CD4-positive, alpha-beta memory T cell (primary cell): ENCODE measurements at regions of chr17 and their contacts with region 1.

Region 1: DNA sequence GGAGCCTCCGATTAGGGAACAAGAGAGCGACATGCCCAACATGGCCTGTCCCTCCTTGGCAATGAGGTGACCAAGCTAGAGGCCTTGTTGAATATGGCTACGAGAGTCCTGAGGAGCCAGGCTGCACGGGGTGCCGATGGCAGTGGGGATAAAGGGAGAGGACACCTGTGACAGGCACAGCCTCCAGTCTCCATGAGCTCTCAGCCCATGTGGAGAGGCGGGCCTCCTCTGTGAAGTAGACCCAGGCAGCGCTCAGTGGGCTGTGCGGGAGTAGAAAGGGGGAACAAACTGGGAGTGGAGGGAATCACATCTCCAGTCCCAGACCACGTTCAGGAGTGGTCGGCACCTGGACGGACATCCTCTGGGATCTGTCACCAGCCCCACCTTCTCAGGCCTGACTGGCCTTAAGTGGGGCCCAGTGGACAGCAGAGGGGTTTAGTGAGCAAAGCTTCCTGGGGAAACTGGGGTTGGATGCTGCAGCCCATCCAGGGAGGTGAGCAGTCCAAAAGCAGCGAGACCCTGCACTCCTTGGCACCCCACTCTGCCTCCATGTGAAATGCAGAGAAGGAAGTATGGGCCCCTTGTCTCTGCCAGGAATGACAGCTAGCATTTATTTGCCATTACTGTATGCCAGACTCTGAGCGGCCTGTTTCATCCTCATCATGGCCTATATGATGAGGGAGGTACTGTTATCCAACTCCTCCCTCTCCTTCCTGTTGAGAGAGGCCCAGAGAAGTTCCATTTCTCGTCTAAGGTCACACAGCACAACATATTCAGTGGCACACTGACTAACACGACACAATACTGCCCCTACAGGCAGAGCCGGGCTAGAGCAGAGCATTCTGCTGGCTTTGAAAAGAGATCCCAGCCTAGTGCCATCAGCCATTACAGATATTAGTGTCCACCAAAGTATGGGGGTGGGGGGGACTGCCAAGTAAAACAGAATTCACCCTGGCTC is 4.5 kb upstream of the TMEM92 start:
- DNase-seq: peak; percentile 33 to 53 (median 42)
- H3K4me3 ChIP-seq: no peak overlapping the region
- H3K4me3 Mint-ChIP-seq: no peak overlapping the region
- H3K27ac ChIP-seq: no peak overlapping the region
- H3K27ac Mint-ChIP-seq: no peak overlapping the region
- H3K4me1 ChIP-seq: peaks cover 4% of the 10 kb centered on the region
- H3K4me1 Mint-ChIP-seq: peaks cover 6 to 8% (median 7%) of the 10 kb centered on the region in 4 donors
- H3K27me3 ChIP-seq: peaks cover 4% of the 10 kb centered on the region
- H3K27me3 Mint-ChIP-seq: peaks cover 6 to 11% of the 10 kb centered on the region in 2 donors

Region 2: GRCh38 chr17:50297407-50297865 is 27.7 kb after region 1 on chr17:
- CTCF ChIA-PET with region 1: interaction called, 9 read pairs
- POLR2A ChIA-PET with region 1: no interaction called
- intact Hi-C with region 1: loop called (anchors 1 kb)
- DNase-seq: peak; percentile 73 to 81 (median 75)
- H3K4me3 ChIP-seq: no peak overlapping the region
- H3K4me3 Mint-ChIP-seq: no peak overlapping the region
- H3K27ac ChIP-seq: no peak overlapping the region
- H3K27ac Mint-ChIP-seq: peak overlapping the region in 1 of 7 donors; percentile 47
- H3K4me1 ChIP-seq: no peaks in the 10 kb centered on the region
- H3K4me1 Mint-ChIP-seq: no peaks in the 10 kb centered on the region
- H3K27me3 ChIP-seq: no peaks in the 10 kb centered on the region
- H3K27me3 Mint-ChIP-seq: peaks cover 0 to 4% of the 10 kb centered on the region in 2 donors